ENCODE measurements at regions of chr3 and their contacts with region 1.

Region 1: GRCh38 chr3:49802719-49803464 is at the start of gene INKA1:
- DNase-seq: peak; percentile 87
- H3K4me3 ChIP-seq: peak within 1 kb of the TSS; percentile 68 to 86 (median 76)
- H3K27ac ChIP-seq: peak within 1 kb of the TSS; percentile 56
- H3K4me1 ChIP-seq: peaks cover 39% of the 10 kb centered on the region
- H3K27me3 ChIP-seq: no peaks in the 10 kb centered on the region
- CTCF ChIP-seq: peak; percentile 86 to 95
- POLR2A ChIP-seq: peak; percentile 51
- total RNA-seq, gene INKA1: 24.0 and 26.5 TPM in 2 replicates

Region 2: GRCh38 chr3:49346797-49347251 is 456.1 kb before region 1 on chr3:
- CTCF ChIA-PET with region 1: no interaction called
- POLR2A ChIA-PET with region 1: no interaction called
- dilution Hi-C with region 1: no loop called
- intact Hi-C with region 1: no loop called
- DNase-seq: no peak
- H3K4me3 ChIP-seq: no peak overlapping the region
- H3K27ac ChIP-seq: peak overlapping the region; percentile 96
- H3K4me1 ChIP-seq: peaks cover 30% of the 10 kb centered on the region
- H3K27me3 ChIP-seq: no peaks in the 10 kb centered on the region
- CTCF ChIP-seq: no peak
- POLR2A ChIP-seq: no peak

Region 3: DNA sequence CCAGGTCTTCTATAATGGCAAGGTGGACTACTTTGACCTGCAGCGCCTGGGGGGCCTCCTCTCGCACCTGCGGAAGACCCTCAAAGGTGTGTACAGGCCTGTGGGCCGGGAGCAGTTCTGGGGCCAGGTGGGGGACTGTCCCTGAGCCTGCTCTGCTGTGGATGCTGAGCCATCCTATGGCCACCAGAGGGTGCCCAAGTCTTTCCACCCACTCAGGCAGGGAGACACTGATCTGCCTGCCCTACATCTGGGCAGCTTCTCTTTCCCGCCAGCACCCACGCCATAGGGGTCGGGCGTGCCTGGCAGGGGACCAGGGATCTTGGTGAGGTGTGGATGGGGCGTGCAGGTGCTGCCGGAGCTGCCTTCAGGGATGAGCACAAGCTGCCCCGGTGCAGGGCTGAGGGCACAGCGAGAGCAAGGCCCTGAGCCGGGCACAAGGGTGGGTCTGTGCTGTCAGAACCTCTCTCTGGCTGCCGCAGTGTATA is 99.4 kb before region 1 on chr3:
- CTCF ChIA-PET with region 1: interaction called, 5 read pairs
- POLR2A ChIA-PET with region 1: no interaction called
- dilution Hi-C with region 1: no loop called
- intact Hi-C with region 1: loop called (anchors 5 kb)
- DNase-seq: peak; percentile 59
- H3K4me3 ChIP-seq: no peak overlapping the region
- H3K27ac ChIP-seq: no peak overlapping the region
- H3K4me1 ChIP-seq: peaks cover 5% of the 10 kb centered on the region
- H3K27me3 ChIP-seq: no peaks in the 10 kb centered on the region
- CTCF ChIP-seq: peak; percentile 75 to 96
- POLR2A ChIP-seq: no peak

Region 4: DNA sequence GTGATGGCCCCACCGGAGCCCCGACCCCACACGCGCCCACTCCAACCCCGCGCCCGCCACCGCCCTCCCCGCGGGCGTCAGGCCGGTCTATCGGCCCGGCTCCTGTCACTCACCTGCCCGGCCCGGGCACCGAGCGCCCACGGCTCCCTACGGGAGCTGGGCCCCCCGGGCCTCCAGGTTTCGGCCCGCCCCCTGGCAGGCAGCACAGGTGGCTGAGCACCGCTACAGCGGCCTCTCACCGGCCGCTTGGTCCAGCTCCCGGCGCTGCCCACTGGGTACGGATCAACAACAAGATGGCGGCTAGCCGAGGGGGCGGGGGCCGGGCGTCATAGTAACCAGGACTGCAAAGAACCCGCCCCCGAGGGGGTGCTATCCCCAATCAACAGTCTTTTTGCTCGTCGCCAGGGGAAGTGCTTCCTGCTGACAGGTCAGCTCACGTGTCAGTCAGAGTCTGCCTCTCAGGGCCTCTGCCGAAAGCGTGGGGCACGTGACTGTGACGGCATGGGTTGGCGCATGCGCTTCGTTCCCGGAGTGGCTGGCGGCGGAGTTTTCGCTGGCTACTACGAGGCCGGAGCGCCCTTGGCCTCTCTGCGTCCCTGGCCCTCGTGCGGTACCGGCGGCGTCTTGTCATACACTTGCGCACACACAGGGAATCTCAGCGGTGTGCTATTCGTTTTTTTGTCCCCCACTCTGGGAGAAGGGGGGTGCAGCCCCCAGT is 16.5 kb before region 1 on chr3 and contains the start of gene IP6K1:
- CTCF ChIA-PET with region 1: interaction called, 11 read pairs
- POLR2A ChIA-PET with region 1: no interaction called
- dilution Hi-C with region 1: no loop called
- intact Hi-C with region 1: loop called (anchors 1 kb)
- DNase-seq: peak; percentile 100
- H3K4me3 ChIP-seq: peak within 1 kb of the TSS; percentile 74 to 85 (median 80)
- H3K27ac ChIP-seq: peak within 1 kb of the TSS; percentile 38
- H3K4me1 ChIP-seq: peaks cover 11% of the 10 kb centered on the region
- H3K27me3 ChIP-seq: no peaks in the 10 kb centered on the region
- CTCF ChIP-seq: no peak
- POLR2A ChIP-seq: peak; percentile 82
- total RNA-seq, gene IP6K1: 54.6 and 60.8 TPM in 2 replicates

Region 5: GRCh38 chr3:49831341-49831740 is 28.4 kb after region 1 on chr3:
- CTCF ChIA-PET with region 1: interaction called, 545 read pairs
- POLR2A ChIA-PET with region 1: no interaction called
- dilution Hi-C with region 1: no loop called
- intact Hi-C with region 1: no loop called
- DNase-seq: no peak
- H3K4me3 ChIP-seq: no peak overlapping the region
- H3K27ac ChIP-seq: no peak overlapping the region
- H3K4me1 ChIP-seq: no peaks in the 10 kb centered on the region
- H3K27me3 ChIP-seq: no peaks in the 10 kb centered on the region
- CTCF ChIP-seq: no peak
- POLR2A ChIP-seq: no peak

Region 6: DNA sequence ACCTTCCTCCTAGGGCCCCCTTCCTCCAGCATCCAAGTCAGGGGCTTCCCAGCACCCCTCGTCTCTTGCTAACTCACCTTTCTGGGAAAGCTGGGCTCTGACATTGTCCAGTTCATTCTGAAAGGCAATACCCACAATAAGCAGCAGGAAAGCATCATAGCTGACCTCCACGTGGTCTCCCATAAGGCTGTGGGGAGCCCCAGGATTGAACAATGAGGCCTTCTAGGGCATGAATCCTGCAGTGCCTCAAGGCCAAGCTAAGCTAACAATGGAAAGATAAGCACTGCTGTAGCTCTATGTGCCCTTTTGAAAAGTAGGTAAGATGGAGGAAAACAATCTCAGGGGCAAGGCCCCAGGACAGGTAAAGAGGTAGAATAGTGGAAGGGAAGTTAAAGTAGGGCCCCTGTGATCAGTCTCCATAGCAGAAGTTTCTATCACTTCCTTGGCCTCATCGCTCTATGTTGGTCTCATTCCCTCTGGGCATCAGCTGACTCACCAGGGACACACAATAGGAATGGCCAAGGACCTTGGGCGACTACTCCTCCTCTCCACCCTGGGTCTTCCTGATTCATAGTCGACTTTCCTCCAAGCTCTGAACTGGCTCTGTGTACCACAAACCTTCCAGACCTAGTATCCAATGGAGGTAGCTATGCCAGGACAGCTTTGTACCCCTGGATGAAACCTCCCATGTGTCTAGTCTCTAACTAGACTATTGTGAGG is 41.7 kb after region 1 on chr3:
- CTCF ChIA-PET with region 1: interaction called, 545 read pairs
- POLR2A ChIA-PET with region 1: interaction called, 15 read pairs
- dilution Hi-C with region 1: no loop called
- intact Hi-C with region 1: loop called (anchors 1 kb)
- DNase-seq: no peak
- H3K4me3 ChIP-seq: no peak overlapping the region
- H3K27ac ChIP-seq: no peak overlapping the region
- H3K4me1 ChIP-seq: peaks cover 11% of the 10 kb centered on the region
- H3K27me3 ChIP-seq: no peaks in the 10 kb centered on the region
- CTCF ChIP-seq: no peak
- POLR2A ChIP-seq: no peak

Region 7: GRCh38 chr3:49906004-49906743 is 103.3 kb after region 1 on chr3:
- CTCF ChIA-PET with region 1: interaction called, 27 read pairs
- POLR2A ChIA-PET with region 1: no interaction called
- dilution Hi-C with region 1: no loop called
- intact Hi-C with region 1: loop called (anchors 2 kb)
- DNase-seq: peak; percentile 64
- H3K4me3 ChIP-seq: peak overlapping the region in 1 of 3 experiments; percentile 41
- H3K27ac ChIP-seq: no peak overlapping the region
- H3K4me1 ChIP-seq: peaks cover 14% of the 10 kb centered on the region
- H3K27me3 ChIP-seq: no peaks in the 10 kb centered on the region
- CTCF ChIP-seq: peak; percentile 63 to 80
- POLR2A ChIP-seq: no peak

Region 8: GRCh38 chr3:50163572-50164455 is 360.9 kb after region 1 on chr3:
- CTCF ChIA-PET with region 1: no interaction called
- POLR2A ChIA-PET with region 1: no interaction called
- dilution Hi-C with region 1: no loop called
- intact Hi-C with region 1: loop called (anchors 5 kb)
- DNase-seq: peak; percentile 75
- H3K4me3 ChIP-seq: no peak overlapping the region
- H3K27ac ChIP-seq: peak overlapping the region; percentile 45
- H3K4me1 ChIP-seq: peaks cover 98% of the 10 kb centered on the region
- H3K27me3 ChIP-seq: no peaks in the 10 kb centered on the region
- CTCF ChIP-seq: no peak
- POLR2A ChIP-seq: peak; percentile 52

Measured in endothelial cell of umbilical vein (primary cell).